ENCODE measurements at regions of chr1 and their contacts with region 1.

Region 1: GRCh38 chr1:179002552-179003345 is 22.9 kb upstream of the FAM20B start:
- DNase-seq: peak; percentile 81 to 83
- H3K4me3 ChIP-seq: no peak overlapping the region
- H3K27ac ChIP-seq: peak overlapping the region in 1 of 2 donors; percentile 6
- H3K4me1 ChIP-seq: no peaks in the 10 kb centered on the region
- H3K27me3 ChIP-seq: no peaks in the 10 kb centered on the region
- CTCF ChIP-seq: peak; percentile 92 to 99 (median 97)
- POLR2A ChIP-seq: no peak

Region 2: DNA sequence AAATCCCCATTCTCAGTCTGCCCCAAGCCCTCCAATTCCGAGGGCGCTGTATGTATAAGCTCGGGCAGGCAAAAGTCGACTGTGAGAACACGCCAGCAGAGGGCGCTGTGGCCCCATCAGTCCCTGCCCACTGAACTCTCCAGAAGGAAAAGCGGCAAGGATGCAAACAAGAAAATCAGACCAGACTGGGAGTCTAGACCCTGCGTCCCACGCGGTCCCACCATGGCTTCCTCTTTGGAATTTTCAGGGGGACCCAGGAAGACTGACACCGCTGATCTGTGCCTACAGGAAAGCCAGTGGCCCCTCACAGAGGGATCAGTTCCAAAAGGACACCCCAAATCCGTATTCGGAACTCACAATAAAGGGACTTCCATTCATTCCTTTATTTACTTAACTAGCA is 470.4 kb before region 1 on chr1:
- intact Hi-C with region 1: loop called (anchors 5 kb)
- DNase-seq: peak; percentile 77 to 80
- H3K4me3 ChIP-seq: no peak overlapping the region
- H3K27ac ChIP-seq: no peak overlapping the region
- H3K4me1 ChIP-seq: no peaks in the 10 kb centered on the region
- H3K27me3 ChIP-seq: no peaks in the 10 kb centered on the region
- CTCF ChIP-seq: peak; percentile 75 to 87 (median 80)
- POLR2A ChIP-seq: no peak

Region 3: GRCh38 chr1:178774263-178774662 is 228.5 kb before region 1 on chr1:
- intact Hi-C with region 1: loop called (anchors 5 kb)
- DNase-seq: no peak
- H3K4me3 ChIP-seq: no peak overlapping the region
- H3K27ac ChIP-seq: no peak overlapping the region
- H3K4me1 ChIP-seq: no peaks in the 10 kb centered on the region
- H3K27me3 ChIP-seq: no peaks in the 10 kb centered on the region
- CTCF ChIP-seq: peak; percentile 22 to 60 (median 54)
- POLR2A ChIP-seq: no peak

Region 4: GRCh38 chr1:178818416-178818815 is 184.3 kb before region 1 on chr1:
- intact Hi-C with region 1: loop called (anchors 10 kb)
- DNase-seq: peak in 1 of 2 donors; percentile 45
- H3K4me3 ChIP-seq: no peak overlapping the region
- H3K27ac ChIP-seq: peak overlapping the region; percentile 31 to 51
- H3K4me1 ChIP-seq: no peaks in the 10 kb centered on the region
- H3K27me3 ChIP-seq: no peaks in the 10 kb centered on the region
- CTCF ChIP-seq: no peak
- POLR2A ChIP-seq: no peak

Measured in uterus (tissue), 4 donors.